Activated CD4-positive, alpha-beta T cell treated with anti-CD3 and anti-CD28 coated beads, Interleukin-2, amount 10 ng/mL, durations not matched to agents 24 days and 14 days (primary cell): ENCODE measurements at regions of chr5 and their contacts with region 1.

Region 1: GRCh38 chr5:74934949-74935751 is 69.0 kb upstream of the FAM169A start:
- DNase-seq: peak; percentile 79
- H3K4me3 Mint-ChIP-seq: peak overlapping the region; percentile 65
- H3K27ac Mint-ChIP-seq: peak overlapping the region; percentile 70
- H3K4me1 Mint-ChIP-seq: peaks cover 35% of the 10 kb centered on the region
- H3K27me3 Mint-ChIP-seq: peaks cover 4% of the 10 kb centered on the region

Region 2: DNA sequence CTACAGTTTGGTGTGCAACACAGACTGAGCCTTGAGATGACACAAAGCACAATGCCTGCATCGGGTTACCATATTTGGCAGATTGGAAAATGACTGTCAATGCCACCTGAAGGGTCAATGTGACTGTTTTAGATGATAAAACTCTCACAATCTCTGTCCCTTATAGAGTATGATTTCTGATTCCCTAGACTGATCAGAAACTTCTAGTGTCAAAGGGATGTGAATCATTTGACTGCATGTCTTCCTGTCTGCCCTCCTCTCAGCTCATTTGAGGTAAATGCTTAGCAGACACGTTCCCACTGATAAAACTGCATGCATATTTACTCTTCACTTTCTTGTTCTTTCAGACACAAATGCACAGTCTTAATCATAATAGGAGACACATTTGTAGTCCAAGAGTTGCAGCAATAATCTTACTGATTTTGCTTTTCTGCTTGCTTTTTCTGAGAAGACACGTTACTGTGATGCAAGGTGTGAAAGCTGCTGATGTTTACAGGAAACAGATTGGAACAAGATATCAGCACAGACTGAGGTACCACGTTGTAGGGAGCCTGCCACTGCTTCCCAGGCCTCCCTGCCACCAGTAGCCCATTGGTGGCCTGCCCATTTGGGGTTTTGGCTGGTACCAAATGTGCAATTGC is 39.4 kb after region 1 on chr5:
- intact Hi-C with region 1: loop called (anchors 5 kb)
- DNase-seq: peak; percentile 64
- H3K4me3 Mint-ChIP-seq: peak overlapping the region; percentile 58
- H3K27ac Mint-ChIP-seq: peak overlapping the region; percentile 82
- H3K4me1 Mint-ChIP-seq: peaks cover 23% of the 10 kb centered on the region
- H3K27me3 Mint-ChIP-seq: peaks cover 1% of the 10 kb centered on the region

Region 3: GRCh38 chr5:75089137-75089536 is 154.0 kb after region 1 on chr5:
- intact Hi-C with region 1: loop called (anchors 5 kb)
- DNase-seq: no peak
- H3K4me3 Mint-ChIP-seq: no peak overlapping the region
- H3K27ac Mint-ChIP-seq: no peak overlapping the region
- H3K4me1 Mint-ChIP-seq: peaks cover 9% of the 10 kb centered on the region
- H3K27me3 Mint-ChIP-seq: peaks cover 8% of the 10 kb centered on the region

Region 4: DNA sequence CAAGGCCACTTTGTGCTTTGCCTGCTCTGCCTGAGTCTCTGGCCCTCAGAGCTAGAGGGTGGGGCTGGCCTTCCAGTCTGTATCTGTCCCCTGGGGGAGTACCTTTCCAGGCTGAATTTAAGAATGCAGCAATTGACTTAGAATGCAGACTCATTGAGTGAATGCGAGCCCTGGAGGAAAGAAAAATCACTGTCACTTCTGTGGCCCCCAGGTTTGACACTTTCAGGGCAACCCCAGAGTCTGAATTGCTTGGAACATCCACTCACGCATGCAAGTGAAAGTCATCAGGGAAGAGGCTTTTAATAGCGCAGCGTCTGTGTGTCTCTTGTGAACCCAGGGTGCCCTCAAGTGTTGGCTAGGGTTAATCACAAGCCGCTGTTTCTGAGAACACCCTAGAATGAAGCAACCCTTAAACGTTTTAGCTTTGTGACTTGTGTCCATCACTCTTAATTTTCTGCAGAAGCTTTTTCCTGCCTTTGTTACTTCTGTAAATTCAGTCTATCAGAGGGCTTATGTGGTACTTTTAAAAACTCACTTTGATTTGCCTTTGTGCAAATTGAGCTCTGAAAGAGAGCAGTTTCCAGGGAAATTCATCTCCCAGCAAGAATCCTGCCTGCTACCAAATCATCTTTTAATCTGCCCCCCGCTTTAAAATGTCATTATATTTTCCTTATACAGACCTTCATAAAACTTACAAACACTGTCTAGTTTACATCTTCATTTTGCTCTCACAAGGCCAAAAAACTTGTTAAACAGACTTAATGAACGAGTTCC is 1321.2 kb after region 1 on chr5:
- intact Hi-C with region 1: loop called (anchors 10 kb)
- DNase-seq: peak; percentile 89
- H3K4me3 Mint-ChIP-seq: no peak overlapping the region
- H3K27ac Mint-ChIP-seq: no peak overlapping the region
- H3K4me1 Mint-ChIP-seq: peaks cover 9% of the 10 kb centered on the region
- H3K27me3 Mint-ChIP-seq: peaks cover 34% of the 10 kb centered on the region